Dendritic cell treated with granulocyte-macrophage colony-stimulating factor and Interleukin-4, amounts not matched to agents 40 ng/mL and 50 ng/mL, for 4 days (primary cell): ENCODE measurements at regions of chrX and their contacts with region 1.

Region 1: GRCh38 chrX:71550578-71550977 is 17.7 kb downstream of the OGT start:
- H3K4me3 Mint-ChIP-seq: no peak overlapping the region
- H3K27ac Mint-ChIP-seq: no peak overlapping the region
- H3K4me1 Mint-ChIP-seq: no peaks in the 10 kb centered on the region
- H3K27me3 Mint-ChIP-seq: no peaks in the 10 kb centered on the region

Region 2: DNA sequence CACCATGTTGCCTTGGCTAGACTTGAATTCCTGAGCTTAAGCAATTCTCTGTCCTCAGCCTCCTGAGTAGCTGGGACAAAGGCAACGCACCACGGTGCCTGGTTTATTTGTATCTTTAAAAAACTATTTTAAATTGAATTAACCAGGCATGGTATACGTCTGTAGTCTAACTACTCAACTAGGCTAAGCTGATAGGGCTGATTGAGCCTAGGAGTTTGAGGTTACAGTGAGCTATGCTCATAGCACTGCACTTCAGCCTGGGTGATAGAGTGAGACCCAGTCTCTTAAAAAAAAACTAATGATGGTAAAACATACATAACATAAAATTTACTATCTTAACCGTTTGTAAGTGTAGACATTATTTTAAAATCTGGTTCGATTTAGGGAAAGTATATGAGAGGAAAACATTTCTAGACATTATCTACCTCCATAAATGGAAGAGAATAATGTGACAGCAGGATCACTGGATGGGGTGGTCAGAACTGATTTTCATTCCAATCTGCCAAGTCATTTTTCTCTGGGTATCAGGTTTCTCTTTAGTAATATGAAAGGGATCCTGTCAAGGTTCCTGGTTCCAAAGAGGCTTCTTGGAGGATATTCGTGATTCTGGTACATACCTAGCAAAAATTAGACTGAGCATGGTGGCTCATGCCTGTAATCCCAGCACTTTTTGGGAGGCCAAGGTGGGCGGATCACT is 257.8 kb before region 1 on chrX:
- intact Hi-C with region 1: loop called (anchors 10 kb)
- H3K4me3 Mint-ChIP-seq: no peak overlapping the region
- H3K27ac Mint-ChIP-seq: no peak overlapping the region
- H3K4me1 Mint-ChIP-seq: no peaks in the 10 kb centered on the region
- H3K27me3 Mint-ChIP-seq: no peaks in the 10 kb centered on the region